ENCODE measurements at regions of chr18 and their contacts with region 1.

Region 1: DNA sequence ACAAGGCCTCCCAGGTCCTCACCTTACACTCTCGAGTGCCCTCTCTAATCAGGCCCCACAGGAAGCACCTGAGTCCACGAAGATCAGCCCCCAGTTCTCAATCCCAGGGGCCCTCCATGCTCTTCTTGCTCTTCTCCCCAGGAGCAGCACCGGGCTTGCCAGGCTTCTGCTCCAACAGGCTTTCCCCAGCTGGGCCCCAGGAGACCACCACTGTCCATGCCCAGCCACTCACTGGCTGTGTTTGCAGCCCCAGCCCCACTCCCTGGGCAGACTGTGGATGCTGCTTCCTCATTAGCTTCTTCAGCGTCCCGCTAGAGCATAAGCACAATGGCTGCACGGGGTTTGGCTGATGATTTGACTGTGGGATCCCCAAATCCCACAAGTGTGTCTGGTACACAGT is 781.9 kb downstream of the GALR1 start:
- DNase-seq: no peak
- ATAC-seq: no peak
- H3K4me3 ChIP-seq: no peak overlapping the region
- H3K27ac ChIP-seq: no peak overlapping the region
- H3K4me1 ChIP-seq: no peaks in the 10 kb centered on the region
- H3K27me3 ChIP-seq: no peaks in the 10 kb centered on the region
- CTCF ChIP-seq: no peak
- POLR2A ChIP-seq: no peak

Region 2: GRCh38 chr18:78138983-78139496 is 107.5 kb after region 1 on chr18:
- in situ Hi-C with region 1: loop called in 1 of 4 experiments (anchors 25 kb)
- intact Hi-C with region 1: no loop called
- DNase-seq: no peak
- ATAC-seq: no peak
- H3K4me3 ChIP-seq: no peak overlapping the region
- H3K27ac ChIP-seq: no peak overlapping the region
- H3K4me1 ChIP-seq: no peaks in the 10 kb centered on the region
- H3K27me3 ChIP-seq: no peaks in the 10 kb centered on the region
- CTCF ChIP-seq: no peak
- POLR2A ChIP-seq: no peak